Gastrocnemius medialis (tissue), 4 donors: ENCODE measurements at regions of chr1 and their contacts with region 1.

Region 1: DNA sequence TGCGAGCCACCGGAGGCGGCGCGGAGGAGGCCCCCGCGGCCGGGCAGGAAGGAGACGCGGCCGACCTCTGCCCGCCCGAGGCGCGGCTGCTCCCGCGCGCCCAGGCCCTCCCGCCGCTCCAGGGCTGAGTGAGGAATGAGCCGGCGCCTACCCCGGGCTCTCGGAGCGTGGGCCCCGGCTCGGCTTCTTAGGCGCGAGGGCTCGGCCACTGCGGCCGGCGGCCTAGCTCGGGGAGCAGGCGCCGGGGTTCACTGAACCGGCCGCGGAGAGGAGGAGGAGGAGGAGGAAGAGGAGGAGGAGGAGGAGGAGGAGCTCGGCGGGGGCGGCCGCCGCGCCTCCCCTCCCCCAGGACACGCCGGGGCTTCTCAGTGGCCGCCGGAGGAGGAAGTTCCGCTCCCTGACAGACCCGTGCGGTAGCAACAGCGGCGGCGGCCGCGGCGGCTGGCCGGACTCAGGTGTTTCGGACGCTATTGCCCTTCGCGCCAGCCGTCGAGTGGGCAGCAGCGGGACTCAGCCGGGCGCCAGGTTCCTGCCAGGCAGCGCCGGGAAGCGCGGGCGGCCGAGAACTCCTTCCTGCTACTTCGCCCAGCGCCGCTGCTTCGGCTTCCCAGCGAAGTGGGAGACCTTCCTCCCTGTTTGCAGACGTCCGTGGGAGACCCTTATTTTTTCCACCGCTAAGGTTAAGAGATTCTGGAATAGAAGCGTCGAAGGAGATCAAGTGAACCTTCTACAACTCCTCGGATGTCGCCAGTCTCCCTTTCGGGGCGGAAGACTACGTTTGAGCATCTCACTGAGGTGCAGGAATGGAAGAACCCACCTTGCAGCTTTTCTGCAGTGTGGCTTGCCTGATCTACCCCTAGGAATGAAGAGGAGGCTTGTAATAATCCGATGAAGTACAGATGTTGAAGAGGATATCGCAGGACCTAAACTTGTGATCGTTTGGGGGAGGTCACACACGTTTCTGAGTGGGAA is at the start of gene MAN1A2:
- DNase-seq: peak; percentile 91 to 92
- ATAC-seq: peak; percentile 75 to 86
- H3K4me3 ChIP-seq: peak within 1 kb of the TSS; percentile 67 to 94 (median 88)
- H3K27ac ChIP-seq: peak within 1 kb of the TSS; percentile 92 to 97 (median 96)
- H3K4me1 ChIP-seq: peaks cover 37 to 43% of the 10 kb centered on the region in 2 donors
- H3K27me3 ChIP-seq: no peaks in the 10 kb centered on the region
- CTCF ChIP-seq: peak in 1 of 5 experiments; percentile 17
- POLR2A ChIP-seq: peak; percentile 90 to 95
- total RNA-seq, gene MAN1A2: 14.9 to 37.0 (median 28.3) TPM

Region 2: DNA sequence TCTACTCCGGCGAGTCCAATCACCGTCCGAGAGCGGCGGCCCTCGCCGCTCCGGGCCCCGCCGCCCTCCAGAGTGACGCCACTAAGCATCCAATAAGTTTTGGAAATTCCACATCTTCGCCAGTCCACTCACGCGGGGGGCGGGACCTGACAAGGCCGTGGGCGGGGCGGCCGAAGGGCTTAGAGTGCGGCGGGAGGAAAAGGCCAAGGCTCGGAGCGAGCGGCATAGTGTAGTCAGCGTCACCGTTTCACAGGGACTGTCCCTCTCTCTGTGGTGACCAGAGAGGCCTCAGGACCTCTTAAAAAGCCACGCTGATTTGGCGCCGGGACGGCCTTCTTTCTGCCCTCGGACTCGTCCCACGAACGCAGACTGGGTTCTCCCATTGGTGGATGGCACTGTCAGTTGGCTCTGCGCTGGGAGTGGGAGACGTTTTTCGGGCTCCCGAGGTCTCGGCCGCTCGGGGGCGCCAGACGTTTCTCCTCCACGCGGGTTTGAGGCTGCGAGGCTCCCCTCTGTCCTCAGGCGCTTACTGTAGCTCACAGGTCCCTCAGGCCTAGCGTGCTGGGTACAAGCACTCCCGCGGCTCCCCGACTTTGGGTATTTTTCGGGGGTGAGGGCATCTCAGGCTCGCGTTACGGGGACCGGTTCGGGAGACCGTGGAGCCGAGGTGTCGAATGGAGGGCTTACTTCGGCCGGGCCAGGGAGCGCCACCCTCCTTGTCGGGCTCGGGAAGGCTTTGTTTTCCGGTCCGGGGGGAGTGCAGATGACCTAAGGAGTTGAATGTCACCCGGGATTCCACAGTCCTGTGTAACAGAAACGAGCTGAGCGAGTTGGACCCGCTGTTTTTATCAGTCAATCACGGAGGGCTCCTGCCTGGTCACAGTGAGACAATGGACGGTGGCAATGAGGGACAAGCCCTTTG is 245.3 kb before region 1 on chr1:
- in situ Hi-C with region 1: no loop called
- intact Hi-C with region 1: loop called (anchors 1 kb)
- DNase-seq: peak; percentile 93 to 97
- ATAC-seq: peak; percentile 84 to 90
- H3K4me3 ChIP-seq: peak overlapping the region; percentile 60 to 85 (median 80)
- H3K27ac ChIP-seq: peak overlapping the region; percentile 87 to 97 (median 92)
- H3K4me1 ChIP-seq: peaks cover 54 to 61% of the 10 kb centered on the region in 2 donors
- H3K27me3 ChIP-seq: no peaks in the 10 kb centered on the region
- CTCF ChIP-seq: peak; percentile 59 to 82 (median 66)
- POLR2A ChIP-seq: peak; percentile 62 to 66

Region 3: GRCh38 chr1:117499071-117499470 is 131.7 kb after region 1 on chr1:
- in situ Hi-C with region 1: no loop called
- intact Hi-C with region 1: loop called (anchors 10 kb)
- DNase-seq: no peak
- ATAC-seq: no peak
- H3K4me3 ChIP-seq: no peak overlapping the region
- H3K27ac ChIP-seq: no peak overlapping the region
- H3K4me1 ChIP-seq: no peaks in the 10 kb centered on the region
- H3K27me3 ChIP-seq: no peaks in the 10 kb centered on the region
- CTCF ChIP-seq: no peak
- POLR2A ChIP-seq: no peak

Region 4: GRCh38 chr1:117605774-117606648 is 238.7 kb after region 1 on chr1 and contains the start of gene TENT5C:
- in situ Hi-C with region 1: loop called in 1 of 4 experiments (anchors 10 kb)
- intact Hi-C with region 1: loop called (anchors 2 kb)
- DNase-seq: peak; percentile 96 to 98
- ATAC-seq: peak; percentile 81 to 83
- H3K4me3 ChIP-seq: peak within 1 kb of the TSS; percentile 67 to 98 (median 86)
- H3K27ac ChIP-seq: peak within 1 kb of the TSS; percentile 86 to 98 (median 96)
- H3K4me1 ChIP-seq: peaks cover 34 to 42% of the 10 kb centered on the region in 2 donors
- H3K27me3 ChIP-seq: no peaks in the 10 kb centered on the region
- CTCF ChIP-seq: peak in 3 of 5 experiments; percentile 3 to 21 (median 4)
- POLR2A ChIP-seq: peak; percentile 97 to 99
- total RNA-seq, gene TENT5C: 2.3 to 21.8 (median 6.4) TPM

Region 5: GRCh38 chr1:117674521-117675397 is 307.4 kb after region 1 on chr1:
- in situ Hi-C with region 1: no loop called
- intact Hi-C with region 1: loop called (anchors 5 kb)
- DNase-seq: peak in 1 of 2 donors; percentile 55
- ATAC-seq: peak; percentile 18 to 35
- H3K4me3 ChIP-seq: no peak overlapping the region
- H3K27ac ChIP-seq: peak overlapping the region; percentile 84 to 95 (median 94)
- H3K4me1 ChIP-seq: peaks cover 71 to 73% of the 10 kb centered on the region in 2 donors
- H3K27me3 ChIP-seq: no peaks in the 10 kb centered on the region
- CTCF ChIP-seq: peak in 3 of 5 experiments; percentile 12 to 34 (median 20)
- POLR2A ChIP-seq: no peak

Region 6: DNA sequence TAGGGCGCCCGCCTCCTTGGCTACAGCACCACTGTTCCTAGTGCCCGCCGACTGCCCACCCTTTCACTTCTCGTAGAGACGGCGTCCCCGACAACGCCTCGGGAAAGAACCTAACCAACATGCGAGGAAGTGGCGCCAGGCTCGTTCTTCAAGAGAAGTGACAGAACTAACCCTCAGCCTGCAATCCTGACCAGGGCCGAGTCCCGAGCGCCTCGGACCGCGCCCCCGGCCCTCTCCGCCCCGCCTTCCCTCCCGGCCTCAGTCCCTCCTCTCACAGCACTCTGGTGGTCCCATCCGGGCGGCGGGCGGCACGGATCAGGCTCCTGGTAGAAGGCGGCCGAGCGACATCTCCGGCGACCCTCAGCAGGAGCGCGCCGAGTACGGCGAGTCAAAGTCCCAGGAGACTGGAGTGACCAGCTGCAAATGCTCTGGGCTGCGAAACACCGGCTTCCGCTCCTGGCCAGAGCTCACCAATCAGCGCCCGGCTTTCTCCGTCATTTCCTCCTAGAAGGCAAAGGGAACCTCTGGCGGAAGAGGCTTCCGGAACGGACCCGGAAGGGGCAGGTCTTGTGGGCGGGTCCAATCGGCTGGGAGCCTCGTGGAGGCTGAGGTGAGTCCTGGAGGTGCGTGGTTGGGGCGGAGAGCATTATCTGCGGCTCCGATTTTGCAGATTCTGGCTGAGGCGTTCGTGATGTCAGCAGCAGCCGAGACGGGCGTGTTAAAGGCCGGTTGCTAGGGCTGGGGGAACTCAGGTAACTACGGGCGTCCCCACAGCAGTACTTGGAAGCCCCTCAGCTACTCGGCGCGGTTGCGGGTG is 562.0 kb after region 1 on chr1 and contains the starts of genes GDAP2 and WDR3:
- in situ Hi-C with region 1: no loop called
- intact Hi-C with region 1: loop called (anchors 5 kb)
- DNase-seq: peak; percentile 95
- ATAC-seq: peak; percentile 97 to 99
- H3K4me3 ChIP-seq: peak within 1 kb of the TSS; percentile 85 to 96 (median 94)
- H3K27ac ChIP-seq: peak within 1 kb of the TSS; percentile 86 to 94 (median 93)
- H3K4me1 ChIP-seq: peaks cover 33 to 38% of the 10 kb centered on the region in 2 donors
- H3K27me3 ChIP-seq: no peaks in the 10 kb centered on the region
- CTCF ChIP-seq: no peak
- POLR2A ChIP-seq: peak; percentile 72 to 77
- total RNA-seq, gene GDAP2: 7.2 to 18.7 (median 8.6) TPM
- total RNA-seq, gene WDR3: 12.9 to 29.2 (median 24.0) TPM